Endothelial cell of umbilical vein (primary cell): ENCODE measurements at regions of chr3 and their contacts with region 1.

Region 1: GRCh38 chr3:79032686-79033318 is 735.0 kb downstream of the ROBO1 start:
- DNase-seq: peak; percentile 62
- H3K4me3 ChIP-seq: no peak overlapping the region
- H3K27ac ChIP-seq: no peak overlapping the region
- H3K4me1 ChIP-seq: peaks cover 2% of the 10 kb centered on the region
- H3K27me3 ChIP-seq: no peaks in the 10 kb centered on the region
- CTCF ChIP-seq: peak; percentile 31 to 32
- POLR2A ChIP-seq: no peak

Region 2: GRCh38 chr3:77348231-77348855 is 1684.5 kb before region 1 on chr3:
- CTCF ChIA-PET with region 1: no interaction called
- POLR2A ChIA-PET with region 1: no interaction called
- dilution Hi-C with region 1: no loop called
- intact Hi-C with region 1: loop called (anchors 10 kb)
- DNase-seq: peak; percentile 9
- H3K4me3 ChIP-seq: no peak overlapping the region
- H3K27ac ChIP-seq: no peak overlapping the region
- H3K4me1 ChIP-seq: no peaks in the 10 kb centered on the region
- H3K27me3 ChIP-seq: no peaks in the 10 kb centered on the region
- CTCF ChIP-seq: peak; percentile 25 to 27
- POLR2A ChIP-seq: no peak

Region 3: DNA sequence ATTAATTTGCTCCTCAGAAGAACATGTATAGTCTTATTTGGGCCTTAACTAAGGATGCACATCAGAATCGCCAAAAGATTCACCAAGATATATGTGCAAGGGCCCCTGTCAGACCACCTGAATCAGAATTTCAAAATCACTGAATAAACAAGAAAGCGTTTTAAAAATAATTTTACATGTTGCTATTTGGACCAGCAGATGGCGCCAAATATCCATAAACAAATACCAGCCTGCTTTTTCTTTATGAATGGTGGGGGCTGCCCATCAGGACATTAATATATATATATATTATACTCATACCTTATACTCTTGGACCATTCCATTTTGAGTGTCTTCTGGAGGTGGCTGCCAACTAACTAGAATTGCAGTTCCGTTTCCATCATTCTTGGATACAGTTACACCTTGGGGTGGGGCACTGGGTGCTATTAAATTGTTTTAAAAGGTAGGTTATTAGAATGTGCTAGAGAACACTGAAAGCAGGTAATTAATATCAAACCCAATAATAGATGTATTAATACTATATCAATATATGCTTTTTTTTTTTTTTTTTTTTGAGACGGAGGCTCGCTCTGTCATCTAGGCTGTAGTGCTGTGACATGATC is 373.3 kb before region 1 on chr3:
- CTCF ChIA-PET with region 1: interaction called, 62 read pairs
- POLR2A ChIA-PET with region 1: no interaction called
- dilution Hi-C with region 1: no loop called
- intact Hi-C with region 1: loop called (anchors 1 kb)
- DNase-seq: peak; percentile 52
- H3K4me3 ChIP-seq: no peak overlapping the region
- H3K27ac ChIP-seq: no peak overlapping the region
- H3K4me1 ChIP-seq: no peaks in the 10 kb centered on the region
- H3K27me3 ChIP-seq: no peaks in the 10 kb centered on the region
- CTCF ChIP-seq: peak; percentile 20 to 29
- POLR2A ChIP-seq: no peak

Region 4: DNA sequence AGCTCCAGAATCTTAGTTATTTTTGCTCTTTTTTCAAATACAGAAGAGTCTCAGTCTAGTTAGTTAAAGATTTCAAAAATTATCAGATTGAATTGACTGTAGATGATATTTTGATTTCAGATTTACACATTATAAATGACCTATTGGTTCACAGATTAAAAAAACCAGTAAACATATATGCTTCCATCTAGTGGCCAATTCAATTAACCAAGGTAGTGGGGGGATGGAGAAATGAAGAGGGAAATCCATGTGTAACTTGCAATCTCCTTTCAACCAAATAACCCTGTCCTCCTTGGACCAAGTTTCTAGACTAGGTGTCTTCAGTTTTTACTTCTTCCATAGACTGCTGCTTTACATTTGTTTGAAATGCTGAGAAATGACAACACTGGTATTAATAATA is 54.8 kb before region 1 on chr3:
- CTCF ChIA-PET with region 1: interaction called, 5 read pairs
- POLR2A ChIA-PET with region 1: no interaction called
- dilution Hi-C with region 1: no loop called
- intact Hi-C with region 1: loop called (anchors 5 kb)
- DNase-seq: peak; percentile 37
- H3K4me3 ChIP-seq: no peak overlapping the region
- H3K27ac ChIP-seq: no peak overlapping the region
- H3K4me1 ChIP-seq: peaks cover 13% of the 10 kb centered on the region
- H3K27me3 ChIP-seq: no peaks in the 10 kb centered on the region
- CTCF ChIP-seq: peak; percentile 20 to 26
- POLR2A ChIP-seq: no peak

Region 5: DNA sequence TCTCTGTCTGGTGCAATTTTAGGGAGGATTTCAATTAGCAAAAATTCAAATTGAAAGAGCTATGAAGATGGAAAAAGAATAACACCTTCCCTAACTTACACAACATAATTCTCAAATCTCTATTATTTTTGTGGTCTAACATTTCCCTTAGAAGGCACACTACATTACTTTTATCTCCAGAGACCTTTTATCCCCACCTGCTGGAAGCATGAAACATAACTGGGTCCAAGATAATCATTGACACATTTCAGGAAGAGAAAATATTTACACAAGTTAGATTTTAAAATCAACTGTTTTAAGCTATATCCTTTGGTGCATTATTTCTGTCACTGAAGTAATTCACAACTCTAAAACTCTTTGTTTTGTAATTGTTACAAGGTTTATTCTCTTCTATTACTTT is 44.5 kb before region 1 on chr3:
- CTCF ChIA-PET with region 1: interaction called, 21 read pairs
- POLR2A ChIA-PET with region 1: no interaction called
- dilution Hi-C with region 1: no loop called
- intact Hi-C with region 1: no loop called
- DNase-seq: peak; percentile 26
- H3K4me3 ChIP-seq: no peak overlapping the region
- H3K27ac ChIP-seq: no peak overlapping the region
- H3K4me1 ChIP-seq: peaks cover 2% of the 10 kb centered on the region
- H3K27me3 ChIP-seq: no peaks in the 10 kb centered on the region
- CTCF ChIP-seq: peak in 1 of 2 donors; percentile 11
- POLR2A ChIP-seq: no peak